WTC11 (cell line): ENCODE measurements at regions of chr7 and their contacts with region 1.

Region 1: DNA sequence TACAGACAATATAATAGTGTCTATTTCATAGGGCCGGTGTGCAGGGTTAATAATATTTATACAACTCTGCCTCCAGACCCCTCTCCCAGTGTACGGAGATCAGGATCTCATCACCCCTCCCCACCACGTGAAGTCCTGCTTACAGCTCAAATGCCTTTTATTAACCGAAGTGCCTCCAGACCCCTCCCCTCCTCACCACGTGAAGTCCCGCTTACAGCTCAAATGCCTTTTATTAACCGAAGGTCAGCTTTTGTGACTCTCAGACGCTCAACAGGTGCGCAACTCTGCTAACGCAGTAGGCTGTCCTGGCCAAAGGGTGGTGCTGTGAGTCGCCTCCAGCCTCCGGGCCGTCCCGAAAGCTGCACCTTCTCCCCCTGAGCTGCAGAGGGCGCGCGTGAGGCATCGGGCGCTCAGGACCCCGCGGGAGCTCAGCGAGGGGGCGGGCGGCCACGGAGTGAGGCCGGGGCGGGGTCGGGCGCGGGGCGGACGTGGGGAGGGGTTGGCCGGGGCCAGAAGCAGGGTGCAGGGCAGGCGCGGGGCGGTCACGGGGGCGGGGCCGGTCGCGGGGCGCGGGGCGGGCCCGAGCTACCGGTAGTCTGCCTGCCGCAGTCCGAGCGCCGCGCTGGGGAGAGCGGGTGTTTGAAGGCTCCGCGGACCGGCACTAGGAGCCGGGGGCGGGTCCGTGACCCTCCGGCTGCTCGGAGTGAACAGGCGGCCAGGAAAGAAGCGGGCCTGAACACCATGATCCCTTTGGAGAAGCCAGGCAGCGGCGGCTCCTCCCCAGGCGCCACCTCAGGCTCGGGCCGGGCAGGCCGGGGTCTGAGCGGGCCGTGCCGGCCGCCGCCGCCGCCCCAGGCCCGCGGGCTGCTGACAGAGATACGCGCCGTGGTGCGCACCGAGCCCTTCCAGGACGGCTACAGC is at the start of gene STK17A:
- DNase-seq: peak; percentile 92
- ATAC-seq: peak; percentile 93
- H3K4me3 Mint-ChIP-seq: peak within 1 kb of the TSS; percentile 85
- H3K27ac Mint-ChIP-seq: no peak within 1 kb of the TSS
- H3K4me1 Mint-ChIP-seq: peaks cover 41% of the 10 kb centered on the region
- H3K27me3 Mint-ChIP-seq: peaks cover 8% of the 10 kb centered on the region
- CTCF ChIP-seq: peak; percentile 91
- total RNA-seq, gene STK17A: 12.2 to 17.6 TPM (median 15.1 TPM) in 3 replicates

Region 2: GRCh38 chr7:43325595-43325994 is 257.2 kb before region 1 on chr7:
- CTCF ChIA-PET with region 1: no interaction called
- POLR2A ChIA-PET with region 1: no interaction called
- DNase-seq: no peak
- ATAC-seq: no peak
- H3K4me3 Mint-ChIP-seq: no peak overlapping the region
- H3K27ac Mint-ChIP-seq: no peak overlapping the region; the same call in 1 of the 2 replicates
- H3K4me1 Mint-ChIP-seq: peaks cover 9% of the 10 kb centered on the region
- H3K27me3 Mint-ChIP-seq: no peaks in the 10 kb centered on the region
- CTCF ChIP-seq: no peak

Region 3: DNA sequence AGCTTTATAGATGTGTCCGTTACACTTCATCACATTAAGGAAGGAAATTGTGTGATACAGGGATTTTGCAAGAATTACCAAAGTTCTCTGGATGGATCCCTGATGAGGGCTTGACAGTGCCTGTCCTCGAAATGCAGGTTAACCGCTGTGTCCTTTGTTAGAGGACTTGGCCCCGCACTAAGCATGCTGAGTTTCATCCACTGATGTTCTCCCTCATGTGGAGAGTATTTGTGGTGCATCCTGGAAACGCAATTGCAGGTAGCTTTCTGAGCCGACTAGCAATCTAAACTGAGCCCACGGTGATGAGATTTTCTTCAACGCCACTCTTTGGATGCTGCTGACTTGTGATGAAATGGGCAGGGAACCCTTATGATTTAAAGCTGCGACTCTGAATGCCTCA is 71.7 kb before region 1 on chr7:
- CTCF ChIA-PET with region 1: interaction called, 33 read pairs
- POLR2A ChIA-PET with region 1: interaction called, 4 read pairs
- DNase-seq: peak; percentile 36
- ATAC-seq: peak; percentile 87
- H3K4me3 Mint-ChIP-seq: no peak overlapping the region
- H3K27ac Mint-ChIP-seq: no peak overlapping the region
- H3K4me1 Mint-ChIP-seq: peaks cover 29% of the 10 kb centered on the region
- H3K27me3 Mint-ChIP-seq: no peaks in the 10 kb centered on the region
- CTCF ChIP-seq: no peak

Region 4: DNA sequence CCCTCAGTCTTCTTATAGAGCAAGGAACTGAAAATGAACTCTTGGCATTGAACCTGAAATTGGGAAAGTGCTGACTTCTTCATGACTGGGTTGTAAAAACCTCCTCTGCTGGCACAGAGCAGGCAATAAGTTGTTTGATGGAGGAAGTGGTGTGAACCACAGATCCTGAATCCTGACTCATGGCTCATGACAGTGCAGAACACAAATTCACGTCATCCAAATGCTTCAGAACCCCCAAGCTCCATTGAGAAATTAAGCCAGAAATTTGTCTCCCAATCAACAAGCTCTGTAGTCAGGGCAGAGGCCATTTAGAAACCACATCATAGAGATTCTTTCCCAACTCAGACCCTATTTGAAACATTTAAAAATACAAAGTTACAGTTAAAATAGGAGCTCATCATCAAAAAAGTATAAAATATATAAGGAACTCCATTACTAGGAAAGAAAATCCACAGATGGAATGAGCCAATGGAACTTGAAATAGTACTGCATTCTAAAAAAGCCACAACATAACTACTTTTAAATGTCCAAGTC is 10.2 kb before region 1 on chr7:
- CTCF ChIA-PET with region 1: interaction called, 38 read pairs
- POLR2A ChIA-PET with region 1: no interaction called
- DNase-seq: no peak
- ATAC-seq: no peak
- H3K4me3 Mint-ChIP-seq: no peak overlapping the region
- H3K27ac Mint-ChIP-seq: no peak overlapping the region
- H3K4me1 Mint-ChIP-seq: peaks cover 4% of the 10 kb centered on the region
- H3K27me3 Mint-ChIP-seq: no peaks in the 10 kb centered on the region
- CTCF ChIP-seq: no peak

Region 5: DNA sequence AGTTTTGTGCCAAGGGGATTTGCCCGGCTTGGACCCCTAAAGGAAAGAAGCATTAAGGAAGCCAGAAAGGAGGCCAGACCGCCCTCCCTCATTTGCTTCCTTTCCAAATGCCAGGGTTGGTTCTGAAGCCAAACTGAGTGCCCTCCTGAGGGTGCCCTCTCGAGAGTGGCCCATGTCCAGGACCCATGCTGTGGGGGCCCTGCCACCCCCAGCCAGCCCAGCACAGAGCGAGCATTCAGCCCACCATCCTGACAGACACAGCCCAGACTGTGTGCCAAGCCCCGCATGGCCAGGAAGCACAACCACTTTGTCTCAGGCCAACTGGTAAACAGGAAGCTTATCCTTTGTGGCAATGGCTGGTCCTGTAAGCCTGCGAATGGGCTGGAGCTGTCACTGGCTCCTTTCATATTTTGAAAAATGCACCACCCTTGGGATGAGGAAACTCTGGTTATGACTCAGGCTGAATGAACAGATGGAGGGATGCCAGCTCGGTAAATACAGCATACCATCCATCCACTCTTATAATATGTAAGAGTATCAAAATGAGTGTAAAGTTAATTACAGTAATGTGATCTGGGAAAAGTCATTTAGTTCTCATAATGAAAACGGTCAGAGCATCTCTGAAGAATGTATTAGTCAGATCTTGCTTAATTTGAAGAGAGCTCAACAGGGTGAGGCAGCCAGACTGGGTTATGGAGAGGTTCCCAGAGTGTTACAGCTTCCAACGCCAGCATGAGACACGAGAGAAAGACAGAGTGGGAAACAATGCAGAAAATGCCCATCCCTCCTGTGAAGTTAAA is 65.1 kb after region 1 on chr7:
- CTCF ChIA-PET with region 1: interaction called, 33 read pairs
- POLR2A ChIA-PET with region 1: interaction called, 7 read pairs
- DNase-seq: no peak
- ATAC-seq: peak; percentile 55
- H3K4me3 Mint-ChIP-seq: no peak overlapping the region
- H3K27ac Mint-ChIP-seq: peak overlapping the region; percentile 98
- H3K4me1 Mint-ChIP-seq: peaks cover 73% of the 10 kb centered on the region
- H3K27me3 Mint-ChIP-seq: no peaks in the 10 kb centered on the region
- CTCF ChIP-seq: no peak

Region 6: GRCh38 chr7:43721193-43721806 is 138.5 kb after region 1 on chr7:
- CTCF ChIA-PET with region 1: interaction called, 63 read pairs
- POLR2A ChIA-PET with region 1: no interaction called
- DNase-seq: no peak
- ATAC-seq: no peak
- H3K4me3 Mint-ChIP-seq: no peak overlapping the region
- H3K27ac Mint-ChIP-seq: peak overlapping the region; percentile 79; the same call in 1 of the 2 replicates
- H3K4me1 Mint-ChIP-seq: peaks cover 7% of the 10 kb centered on the region
- H3K27me3 Mint-ChIP-seq: no peaks in the 10 kb centered on the region
- CTCF ChIP-seq: no peak; the same call in 1 of the 2 replicates

Region 7: GRCh38 chr7:43815373-43815772 is 232.6 kb after region 1 on chr7:
- CTCF ChIA-PET with region 1: interaction called, 13 read pairs
- POLR2A ChIA-PET with region 1: no interaction called
- DNase-seq: no peak
- ATAC-seq: peak; percentile 73
- H3K4me3 Mint-ChIP-seq: peak overlapping the region; percentile 26
- H3K27ac Mint-ChIP-seq: no peak overlapping the region
- H3K4me1 Mint-ChIP-seq: peaks cover 34% of the 10 kb centered on the region
- H3K27me3 Mint-ChIP-seq: peaks cover 80% of the 10 kb centered on the region
- CTCF ChIP-seq: no peak

Region 8: DNA sequence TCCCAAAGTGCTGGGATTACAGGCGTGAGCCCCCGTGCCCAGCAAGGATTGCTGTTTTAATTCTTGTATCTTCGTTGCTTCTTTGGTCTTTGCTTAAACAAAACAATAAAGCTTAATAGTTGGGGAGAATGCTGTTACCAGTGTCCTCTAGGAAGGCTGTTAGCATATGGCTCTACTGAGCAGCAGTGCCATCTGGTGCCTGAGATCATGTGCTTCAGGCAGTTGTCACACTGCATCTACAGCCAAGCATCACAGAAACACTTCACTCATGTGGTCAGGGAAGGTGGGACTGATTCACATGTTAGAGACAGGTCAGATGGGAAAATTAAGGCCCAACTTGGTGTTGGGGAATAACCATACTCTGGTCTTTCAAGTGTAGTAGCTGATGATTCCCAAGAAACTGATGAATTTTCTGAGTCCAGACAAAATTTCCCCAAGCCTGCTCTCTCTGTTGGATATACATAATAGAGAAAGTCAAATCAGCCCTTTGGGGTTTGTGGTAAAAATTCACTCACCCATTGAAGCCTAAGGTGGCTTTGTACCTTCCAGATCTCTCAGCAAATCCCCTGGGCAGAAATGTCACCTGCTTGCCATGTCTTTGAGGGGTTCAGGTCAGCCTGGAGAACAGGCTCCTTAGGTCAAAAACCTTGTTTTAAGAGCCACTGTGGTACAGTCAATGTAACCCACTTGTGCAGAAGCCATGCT is 371.9 kb after region 1 on chr7:
- CTCF ChIA-PET with region 1: interaction called, 10 read pairs
- POLR2A ChIA-PET with region 1: no interaction called
- DNase-seq: peak; percentile 45
- ATAC-seq: peak; percentile 98
- H3K4me3 Mint-ChIP-seq: no peak overlapping the region
- H3K27ac Mint-ChIP-seq: 0 out of 2 replicates have a peak overlapping the region, but pooled peaks have one; percentile 1
- H3K4me1 Mint-ChIP-seq: peaks cover 9% of the 10 kb centered on the region
- H3K27me3 Mint-ChIP-seq: no peaks in the 10 kb centered on the region; the same call in 1 of the 2 replicates
- CTCF ChIP-seq: no peak